CD14-positive monocyte (primary cell): ENCODE measurements at regions of chr11 and their contacts with region 1.

Region 1: DNA sequence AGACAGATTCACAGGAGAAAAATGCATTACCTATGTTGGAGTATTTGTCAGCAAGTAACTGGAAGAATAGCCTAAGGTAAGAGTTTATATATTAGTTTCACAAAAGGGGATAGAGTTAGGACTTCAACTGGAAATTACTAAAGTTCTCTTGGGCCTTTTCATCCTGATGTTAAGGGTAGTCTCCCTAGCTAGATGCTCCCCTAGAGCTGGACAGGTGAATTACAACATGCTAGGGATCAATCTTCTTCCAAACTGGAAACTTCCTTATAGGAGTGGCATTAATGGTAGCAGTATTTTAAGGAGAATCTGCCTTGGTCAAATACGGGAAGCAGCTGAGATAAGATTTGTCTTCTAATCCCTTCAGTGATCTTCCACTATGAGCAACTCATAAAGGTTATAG is 632.8 kb upstream of the RAG2 start:
- DNase-seq: no peak
- H3K4me3 ChIP-seq: no peak overlapping the region
- H3K4me3 Mint-ChIP-seq: no peak overlapping the region
- H3K27ac ChIP-seq: no peak overlapping the region
- H3K27ac Mint-ChIP-seq: no peak overlapping the region
- H3K4me1 ChIP-seq: no peaks in the 10 kb centered on the region
- H3K4me1 Mint-ChIP-seq: no peaks in the 10 kb centered on the region
- H3K27me3 ChIP-seq: no peaks in the 10 kb centered on the region
- H3K27me3 Mint-ChIP-seq: no peaks in the 10 kb centered on the region
- CTCF ChIP-seq: no peak

Region 2: GRCh38 chr11:37280200-37280599 is 49.3 kb after region 1 on chr11:
- intact Hi-C with region 1: loop called in 1 of 2 experiments (anchors 10 kb)
- DNase-seq: no peak
- H3K4me3 ChIP-seq: no peak overlapping the region
- H3K4me3 Mint-ChIP-seq: no peak overlapping the region
- H3K27ac ChIP-seq: no peak overlapping the region
- H3K27ac Mint-ChIP-seq: no peak overlapping the region
- H3K4me1 ChIP-seq: no peaks in the 10 kb centered on the region
- H3K4me1 Mint-ChIP-seq: no peaks in the 10 kb centered on the region
- H3K27me3 ChIP-seq: no peaks in the 10 kb centered on the region
- H3K27me3 Mint-ChIP-seq: no peaks in the 10 kb centered on the region
- CTCF ChIP-seq: no peak